ENCODE measurements at regions of chr1 and their contacts with region 1.

Region 1: DNA sequence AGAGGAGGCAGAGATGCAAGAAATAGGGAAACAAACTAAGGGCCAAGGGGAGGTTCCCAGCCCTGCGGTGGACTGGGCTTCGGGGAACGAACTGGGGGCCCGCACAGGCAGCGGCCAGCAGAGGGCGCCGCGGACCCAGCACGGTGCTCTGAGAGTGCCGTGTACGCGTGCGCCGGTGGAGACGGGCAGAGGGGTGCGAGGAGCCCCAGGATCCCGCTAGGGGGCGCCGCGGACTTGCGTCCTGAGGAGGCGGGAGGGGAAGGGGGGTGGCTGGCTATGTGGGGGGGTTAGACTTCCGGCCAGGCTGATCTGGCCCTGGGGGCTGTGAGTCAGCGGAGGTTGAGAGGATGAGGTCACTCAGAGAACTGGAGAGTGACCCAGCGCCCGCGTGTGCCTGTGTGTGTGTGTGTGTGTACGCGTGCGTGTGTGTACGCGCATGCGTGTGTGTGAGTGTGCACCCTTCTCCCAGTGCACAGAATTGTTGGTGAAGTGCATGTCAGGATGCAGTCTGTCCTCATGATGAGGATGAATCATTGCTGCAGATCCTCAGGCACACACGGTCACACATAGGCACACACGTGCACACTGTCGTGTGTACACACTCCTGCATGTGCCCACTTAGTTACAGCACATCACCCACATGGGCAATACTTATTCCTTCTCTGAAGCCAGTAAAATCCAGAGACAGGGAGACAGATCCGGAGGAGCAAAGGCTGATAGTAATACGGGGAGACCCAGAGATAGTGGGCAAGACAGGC is 17.0 kb downstream of the NES start:
- DNase-seq: peak in 1 of 2 donors; percentile 97
- H3K4me3 ChIP-seq: peak overlapping the region in 1 of 2 donors; percentile 5
- H3K27ac ChIP-seq: peak overlapping the region; percentile 85
- H3K4me1 ChIP-seq: peaks cover 69% of the 10 kb centered on the region
- H3K27me3 ChIP-seq: no peaks in the 10 kb centered on the region
- CTCF ChIP-seq: peak; percentile 98 to 99 (median 99)
- POLR2A ChIP-seq: no peak

Region 2: GRCh38 chr1:156383023-156383422 is 277.1 kb before region 1 on chr1:
- intact Hi-C with region 1: loop called (anchors 5 kb)
- DNase-seq: no peak
- H3K4me3 ChIP-seq: no peak overlapping the region
- H3K27ac ChIP-seq: no peak overlapping the region
- H3K4me1 ChIP-seq: no peaks in the 10 kb centered on the region
- H3K27me3 ChIP-seq: no peaks in the 10 kb centered on the region
- CTCF ChIP-seq: peak; percentile 8 to 45 (median 23)
- POLR2A ChIP-seq: no peak

Region 3: GRCh38 chr1:156583821-156584622 is 76.2 kb before region 1 on chr1:
- intact Hi-C with region 1: loop called (anchors 5 kb)
- DNase-seq: no peak
- H3K4me3 ChIP-seq: no peak overlapping the region
- H3K27ac ChIP-seq: no peak overlapping the region
- H3K4me1 ChIP-seq: no peaks in the 10 kb centered on the region
- H3K27me3 ChIP-seq: no peaks in the 10 kb centered on the region
- CTCF ChIP-seq: peak; percentile 84 to 92 (median 90)
- POLR2A ChIP-seq: no peak

Region 4: GRCh38 chr1:156625436-156626078 is 34.6 kb before region 1 on chr1:
- intact Hi-C with region 1: loop called (anchors 5 kb)
- DNase-seq: no peak
- H3K4me3 ChIP-seq: peak overlapping the region; percentile 40
- H3K27ac ChIP-seq: peak overlapping the region; percentile 53
- H3K4me1 ChIP-seq: peaks cover 19% of the 10 kb centered on the region
- H3K27me3 ChIP-seq: peaks cover 17% of the 10 kb centered on the region
- CTCF ChIP-seq: peak; percentile 71 to 76 (median 71)
- POLR2A ChIP-seq: no peak

Region 5: DNA sequence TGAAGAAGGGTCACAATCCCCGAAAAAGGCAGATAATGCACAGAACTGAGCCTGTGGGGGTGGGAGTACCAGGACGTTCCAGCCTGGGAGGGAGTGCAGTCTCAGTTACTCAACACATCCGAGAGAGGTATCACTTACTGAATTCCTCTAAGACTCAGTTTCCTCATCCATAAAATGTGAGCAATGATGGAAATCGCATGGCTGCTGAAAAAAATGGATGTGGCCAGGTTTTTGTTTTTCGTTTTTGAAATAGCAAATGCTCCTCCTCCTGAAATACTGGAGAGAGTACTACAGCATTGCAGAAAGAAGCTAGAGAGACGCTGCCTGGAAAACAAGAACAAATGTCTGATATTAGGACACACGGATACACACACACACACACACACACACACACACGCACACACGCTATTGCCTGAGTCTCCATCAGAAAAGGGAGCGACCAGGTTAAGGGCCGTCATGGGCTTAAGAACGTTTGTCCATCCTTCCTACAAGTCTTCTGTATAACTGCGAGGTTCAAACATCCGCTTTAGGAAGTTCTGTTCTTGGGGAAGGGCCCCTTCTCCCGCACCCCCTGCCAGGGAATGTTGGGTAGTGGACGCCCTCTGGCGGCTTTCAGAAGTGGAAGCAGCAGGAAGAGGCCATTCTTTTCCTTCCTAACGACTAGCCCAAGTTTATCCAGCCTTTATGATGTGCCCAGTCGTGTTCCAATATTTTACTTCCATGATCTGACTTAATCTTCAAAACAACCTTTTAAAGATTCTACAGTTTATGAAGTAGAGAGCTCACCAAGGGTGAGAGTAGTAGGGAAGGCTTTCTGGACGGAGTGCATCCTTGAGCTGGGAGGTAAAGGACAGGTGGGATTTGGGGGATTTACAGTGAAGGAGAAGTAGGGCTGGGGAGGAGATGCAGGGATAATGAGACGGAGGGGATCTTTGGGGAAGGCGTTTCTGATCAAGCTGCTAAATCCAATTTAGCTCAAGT is 17.7 kb after region 1 on chr1:
- intact Hi-C with region 1: loop called (anchors 2 kb)
- DNase-seq: no peak
- H3K4me3 ChIP-seq: peak overlapping the region; percentile 48 to 82
- H3K27ac ChIP-seq: peak overlapping the region; percentile 91
- H3K4me1 ChIP-seq: peaks cover 37% of the 10 kb centered on the region
- H3K27me3 ChIP-seq: no peaks in the 10 kb centered on the region
- CTCF ChIP-seq: peak; percentile 77 to 96 (median 80)
- POLR2A ChIP-seq: no peak

Measured in vagina (tissue), 2 donors.